Breast epithelium (tissue), 4 donors: ENCODE measurements at regions of chr4 and their contacts with region 1.

Region 1: GRCh38 chr4:58541926-58542325 is 1431.7 kb upstream of the IGFBP7 start:
- DNase-seq: no peak
- H3K4me3 ChIP-seq: no peak overlapping the region
- H3K27ac ChIP-seq: no peak overlapping the region
- H3K4me1 ChIP-seq: no peaks in the 10 kb centered on the region
- H3K27me3 ChIP-seq: no peaks in the 10 kb centered on the region
- CTCF ChIP-seq: no peak
- POLR2A ChIP-seq: no peak

Region 2: GRCh38 chr4:58553674-58554073 is 11.7 kb after region 1 on chr4:
- intact Hi-C with region 1: loop called (anchors 1 kb)
- DNase-seq: no peak
- H3K4me3 ChIP-seq: no peak overlapping the region
- H3K27ac ChIP-seq: no peak overlapping the region
- H3K4me1 ChIP-seq: no peaks in the 10 kb centered on the region
- H3K27me3 ChIP-seq: no peaks in the 10 kb centered on the region
- CTCF ChIP-seq: no peak
- POLR2A ChIP-seq: no peak